ENCODE measurements at regions of chr16 and their contacts with region 1.

Region 1: GRCh38 chr16:57519796-57520360 is 16.5 kb downstream of the CCDC102A start:
- DNase-seq: peak; percentile 36
- ATAC-seq: peak; percentile 93
- H3K4me3 ChIP-seq: no peak overlapping the region
- H3K27ac ChIP-seq: no peak overlapping the region
- H3K4me1 ChIP-seq: no peaks in the 10 kb centered on the region
- H3K27me3 ChIP-seq: no peaks in the 10 kb centered on the region
- CTCF ChIP-seq: peak; percentile 93

Region 2: DNA sequence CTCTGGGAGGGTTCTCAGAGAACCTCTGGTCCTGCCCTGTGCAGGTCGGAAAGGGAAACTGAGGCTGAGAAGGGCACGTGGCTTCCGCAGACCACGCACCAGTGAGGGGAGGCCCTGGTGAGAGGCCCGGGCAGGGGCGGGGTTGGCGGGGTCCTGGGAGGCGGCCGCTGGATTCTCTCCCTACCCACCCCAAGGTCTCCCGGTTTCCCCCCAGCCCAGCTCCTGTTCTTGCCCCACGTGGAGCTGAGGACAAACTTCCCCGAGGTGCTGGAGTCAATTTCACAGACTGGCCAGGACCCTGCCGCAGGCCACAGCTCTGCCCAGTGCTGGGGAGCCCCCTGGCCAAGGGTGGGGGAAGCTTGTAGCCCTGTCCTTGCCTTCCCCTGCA is 103.8 kb before region 1 on chr16:
- CTCF ChIA-PET with region 1: no interaction called
- POLR2A ChIA-PET with region 1: no interaction called
- in situ Hi-C with region 1: no loop called
- intact Hi-C with region 1: loop called (anchors 5 kb)
- DNase-seq: no peak
- ATAC-seq: 0 out of 2 replicates have a peak, but pooled peaks have one; percentile 9
- H3K4me3 ChIP-seq: no peak overlapping the region
- H3K27ac ChIP-seq: no peak overlapping the region; the same call in 1 of the 2 replicates
- H3K4me1 ChIP-seq: peaks cover 16% of the 10 kb centered on the region
- H3K27me3 ChIP-seq: no peaks in the 10 kb centered on the region
- CTCF ChIP-seq: no peak

Region 3: DNA sequence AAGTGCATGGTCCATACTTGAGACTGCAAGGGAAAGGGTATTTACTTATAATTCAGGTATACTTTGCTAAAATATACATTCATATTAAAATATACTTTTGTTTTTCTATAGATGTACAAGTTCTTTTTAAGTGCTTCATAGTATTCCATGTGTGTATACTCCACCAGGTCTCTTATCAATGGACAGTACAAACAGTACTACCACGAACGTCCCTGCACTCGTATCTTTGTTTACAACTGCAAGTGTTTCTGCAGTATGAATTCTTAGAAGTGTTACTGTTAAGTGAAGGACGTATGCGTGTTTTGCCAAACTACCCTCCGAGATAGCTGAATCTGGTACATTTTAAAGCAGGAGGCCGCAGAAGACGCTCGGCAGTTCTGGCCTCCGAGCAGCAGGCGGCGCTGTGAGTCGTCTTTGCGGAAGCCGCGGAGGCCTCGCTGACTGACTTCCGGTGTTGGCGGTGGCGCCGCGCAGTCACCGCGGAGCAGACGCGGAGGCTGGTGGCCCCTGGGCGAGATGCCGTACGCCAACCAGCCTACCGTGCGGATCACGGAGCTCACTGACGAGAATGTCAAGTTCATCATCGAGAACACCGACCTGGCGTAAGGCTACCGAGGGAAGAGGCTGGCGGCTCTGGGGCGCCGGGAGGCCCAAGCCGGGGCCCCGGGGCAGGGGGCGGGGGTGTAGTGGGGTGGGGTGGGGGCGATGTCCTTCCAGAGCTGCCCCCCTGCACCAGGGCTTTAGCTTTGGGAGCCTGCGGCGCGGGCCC is 57.5 kb before region 1 on chr16 and contains the start of gene POLR2C:
- CTCF ChIA-PET with region 1: no interaction called
- POLR2A ChIA-PET with region 1: no interaction called
- in situ Hi-C with region 1: no loop called
- intact Hi-C with region 1: loop called (anchors 10 kb)
- DNase-seq: peak; percentile 43
- ATAC-seq: peak; percentile 96
- H3K4me3 ChIP-seq: peak within 1 kb of the TSS; percentile 90 to 92
- H3K27ac ChIP-seq: peak within 1 kb of the TSS; percentile 81
- H3K4me1 ChIP-seq: 0 out of 2 replicates have a peak, but pooled peaks cover 2% of the 10 kb centered on the region
- H3K27me3 ChIP-seq: no peaks in the 10 kb centered on the region
- CTCF ChIP-seq: peak; percentile 93
- total RNA-seq, gene POLR2C: 53.9 TPM

Region 4: GRCh38 chr16:57946181-57946801 is 426.4 kb after region 1 on chr16:
- CTCF ChIA-PET with region 1: no interaction called
- POLR2A ChIA-PET with region 1: interaction called, 15 read pairs
- in situ Hi-C with region 1: no loop called
- intact Hi-C with region 1: no loop called
- DNase-seq: no peak
- ATAC-seq: no peak
- H3K4me3 ChIP-seq: no peak overlapping the region
- H3K27ac ChIP-seq: no peak overlapping the region
- H3K4me1 ChIP-seq: no peaks in the 10 kb centered on the region
- H3K27me3 ChIP-seq: no peaks in the 10 kb centered on the region
- CTCF ChIP-seq: no peak